ENCODE measurements at regions of chr1 and their contacts with region 1.

Region 1: GRCh38 chr1:44730741-44731512 is at the start of gene RNU5D-1:
- DNase-seq: peak; percentile 98
- ATAC-seq: peak; percentile 85
- H3K4me3 Mint-ChIP-seq: peak within 1 kb of the TSS; percentile 67
- H3K27ac Mint-ChIP-seq: peak within 1 kb of the TSS; percentile 100
- H3K4me1 Mint-ChIP-seq: peaks cover 45% of the 10 kb centered on the region
- H3K27me3 Mint-ChIP-seq: no peaks in the 10 kb centered on the region
- total RNA-seq, gene RNU5D-1: not detected

Region 2: DNA sequence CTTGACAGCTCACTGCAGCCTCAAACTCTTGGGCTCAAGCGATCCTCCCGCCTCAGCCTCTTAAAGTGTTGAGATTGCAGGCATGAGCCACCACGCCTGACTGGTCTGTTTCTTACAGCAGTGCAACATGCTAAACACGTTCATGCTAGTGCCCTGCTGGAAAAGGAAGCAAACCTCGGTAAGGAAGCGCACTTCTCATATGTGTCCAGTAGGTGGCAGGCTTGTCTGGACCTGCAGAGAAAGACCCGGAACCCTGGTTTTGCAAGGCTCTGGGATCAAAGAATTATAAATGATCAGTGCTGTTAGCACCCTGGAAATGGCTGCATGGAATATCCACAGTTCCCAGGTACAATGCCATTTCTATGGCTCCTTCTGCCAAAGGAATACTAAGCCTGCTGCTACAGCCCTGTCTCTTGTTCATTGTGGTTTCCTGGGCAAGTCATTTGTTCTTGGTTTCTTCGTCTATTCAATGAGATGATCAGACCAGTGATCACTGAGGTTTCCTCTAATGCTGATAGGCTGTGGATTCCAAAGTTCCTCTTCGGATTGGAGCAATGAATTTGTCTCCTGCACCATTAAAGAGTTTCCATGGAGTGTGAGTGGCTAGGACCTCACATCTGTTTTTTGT is 15.9 kb before region 1 on chr1:
- CTCF ChIA-PET with region 1: interaction called, 34 read pairs
- POLR2A ChIA-PET with region 1: interaction called, 580 read pairs
- intact Hi-C with region 1: loop called in 1 of 2 experiments (anchors 2 kb)
- DNase-seq: peak; percentile 79
- ATAC-seq: peak; percentile 81
- H3K4me3 Mint-ChIP-seq: peak overlapping the region; percentile 16
- H3K27ac Mint-ChIP-seq: peak overlapping the region; percentile 67
- H3K4me1 Mint-ChIP-seq: peaks cover 48% of the 10 kb centered on the region
- H3K27me3 Mint-ChIP-seq: no peaks in the 10 kb centered on the region

Region 3: DNA sequence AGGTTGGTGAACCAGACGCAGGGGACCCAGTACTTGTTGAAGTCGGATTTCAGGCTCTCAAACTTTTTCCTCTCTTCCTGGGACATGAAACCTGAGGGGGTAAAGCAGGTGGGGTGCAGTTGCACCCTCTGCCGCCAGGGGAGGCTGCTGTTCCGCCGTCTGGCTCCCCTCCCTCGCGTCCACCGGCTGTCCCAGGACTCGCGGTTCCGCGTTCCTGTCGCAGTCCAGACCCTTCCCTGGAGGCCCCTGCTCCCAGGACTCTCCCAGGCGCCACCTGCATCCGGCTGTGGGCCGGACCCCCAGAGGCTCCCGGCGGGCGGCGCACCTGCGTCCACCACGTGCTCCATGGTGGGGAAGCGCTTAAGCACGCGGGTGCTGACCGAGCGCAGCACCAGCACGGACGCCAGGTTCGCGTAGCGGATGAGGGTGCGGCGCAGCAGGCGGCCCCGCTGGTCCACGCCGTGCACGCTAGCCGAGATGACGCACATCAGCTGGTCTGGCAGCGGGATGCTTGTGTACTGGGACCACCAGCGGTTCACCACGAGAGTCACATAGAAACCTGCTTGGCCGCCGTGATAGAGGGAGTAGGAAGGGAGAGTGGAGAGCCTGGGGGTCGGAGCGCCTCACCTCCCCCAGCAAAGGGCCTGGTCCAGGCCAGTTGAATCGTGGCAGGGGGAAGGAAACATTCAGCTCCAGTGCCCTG is 55.4 kb after region 1 on chr1:
- CTCF ChIA-PET with region 1: interaction called, 13 read pairs
- POLR2A ChIA-PET with region 1: interaction called, 13 read pairs
- intact Hi-C with region 1: no loop called
- DNase-seq: peak; percentile 85
- ATAC-seq: peak; percentile 73
- H3K4me3 Mint-ChIP-seq: peak overlapping the region; percentile 66
- H3K27ac Mint-ChIP-seq: peak overlapping the region; percentile 69
- H3K4me1 Mint-ChIP-seq: peaks cover 31% of the 10 kb centered on the region
- H3K27me3 Mint-ChIP-seq: no peaks in the 10 kb centered on the region

Region 4: GRCh38 chr1:44807262-44808062 is 76.5 kb after region 1 on chr1 and contains the start of gene DYNLT4:
- CTCF ChIA-PET with region 1: interaction called, 19 read pairs
- POLR2A ChIA-PET with region 1: interaction called, 68 read pairs
- intact Hi-C with region 1: loop called (anchors 1 kb)
- DNase-seq: peak; percentile 94
- ATAC-seq: peak; percentile 57
- H3K4me3 Mint-ChIP-seq: peak within 1 kb of the TSS; percentile 87
- H3K27ac Mint-ChIP-seq: peak within 1 kb of the TSS; percentile 99
- H3K4me1 Mint-ChIP-seq: peaks cover 92% of the 10 kb centered on the region
- H3K27me3 Mint-ChIP-seq: no peaks in the 10 kb centered on the region
- total RNA-seq, gene DYNLT4: 0.32 TPM in 1 of 2 experiments, not detected in the other

Region 5: DNA sequence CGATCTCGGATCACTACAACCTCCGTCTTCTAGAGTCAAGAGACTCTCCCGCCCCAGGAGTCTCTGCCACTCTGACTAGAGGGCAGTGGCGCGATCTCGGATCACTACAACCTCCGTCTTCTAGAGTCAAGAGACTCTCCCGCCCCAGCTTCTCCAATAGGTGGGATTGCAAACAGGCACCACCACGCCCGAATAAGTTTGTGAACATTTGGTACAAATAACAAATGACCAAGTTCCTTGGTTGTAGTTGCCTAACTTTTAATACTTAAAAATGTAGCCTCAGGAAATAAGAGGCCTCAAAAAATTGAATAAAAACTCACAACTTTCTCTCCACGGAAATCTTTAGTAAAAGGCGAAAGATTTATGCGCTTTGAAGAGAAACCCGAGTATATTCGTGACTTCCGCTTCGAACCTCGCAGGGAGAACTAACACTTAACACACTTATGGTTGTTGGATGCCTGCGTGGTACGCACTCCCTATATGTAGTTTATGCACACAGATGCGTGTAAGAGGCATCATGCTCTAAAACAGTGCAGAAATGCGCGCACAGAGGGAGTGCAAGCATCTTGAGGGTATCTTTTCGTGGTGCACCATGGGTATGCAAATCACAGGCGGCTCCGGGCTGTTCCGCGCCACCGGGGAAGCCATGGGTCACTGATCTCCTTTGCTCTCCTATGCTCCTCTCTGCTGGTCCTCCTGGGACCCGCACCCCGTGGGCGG is 88.8 kb after region 1 on chr1:
- CTCF ChIA-PET with region 1: interaction called, 20 read pairs
- POLR2A ChIA-PET with region 1: interaction called, 675 read pairs
- intact Hi-C with region 1: loop called (anchors 1 kb)
- DNase-seq: peak; percentile 88
- ATAC-seq: peak; percentile 88
- H3K4me3 Mint-ChIP-seq: peak overlapping the region; percentile 85
- H3K27ac Mint-ChIP-seq: peak overlapping the region; percentile 100
- H3K4me1 Mint-ChIP-seq: peaks cover 37% of the 10 kb centered on the region
- H3K27me3 Mint-ChIP-seq: no peaks in the 10 kb centered on the region

Measured in activated CD4-positive, alpha-beta T cell treated with anti-CD3 and anti-CD28 coated beads for 36 hours (primary cell).